ENCODE measurements at regions of chr2 and their contacts with region 1.

Region 1: DNA sequence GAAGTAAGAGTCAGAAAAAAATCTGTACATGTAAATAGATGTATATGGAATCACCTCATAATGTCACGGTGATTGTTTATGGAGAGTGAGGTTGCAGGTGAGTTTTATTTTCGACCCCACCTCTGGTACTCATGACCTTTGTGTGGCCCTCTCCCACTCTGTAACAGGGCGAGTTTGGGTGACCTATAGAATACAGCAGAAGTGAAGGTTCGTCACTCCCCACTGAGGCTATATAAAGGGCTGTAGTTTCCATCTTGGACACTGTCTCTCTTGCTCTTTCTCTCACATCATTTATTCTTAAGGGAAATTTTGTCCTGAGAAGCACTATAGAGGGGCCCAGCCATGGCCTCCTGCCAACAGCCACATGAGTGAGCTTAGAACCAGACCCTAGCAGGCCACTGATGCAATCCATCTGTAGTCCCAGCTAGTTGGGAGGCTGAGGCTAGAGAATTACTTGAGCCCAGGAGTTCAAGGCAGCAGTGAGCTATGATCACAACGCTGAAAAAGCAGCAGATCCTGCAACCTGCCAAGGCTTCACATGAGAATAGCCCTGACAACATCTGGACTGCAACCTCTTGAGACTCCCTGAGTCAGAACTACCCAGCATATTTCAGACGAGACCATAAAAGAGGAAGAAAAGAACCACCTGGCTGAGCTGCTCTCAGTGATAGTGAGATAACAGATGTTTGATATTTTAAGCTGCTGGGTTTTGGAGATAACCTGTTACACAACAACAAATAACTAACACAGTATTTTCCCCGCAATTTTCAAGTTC is 74.3 kb upstream of the SLC1A4 start:
- DNase-seq: no peak
- H3K4me3 ChIP-seq: no peak overlapping the region
- H3K27ac ChIP-seq: no peak overlapping the region
- H3K4me1 ChIP-seq: peaks cover 3% of the 10 kb centered on the region
- H3K27me3 ChIP-seq: no peaks in the 10 kb centered on the region
- CTCF ChIP-seq: no peak

Region 2: DNA sequence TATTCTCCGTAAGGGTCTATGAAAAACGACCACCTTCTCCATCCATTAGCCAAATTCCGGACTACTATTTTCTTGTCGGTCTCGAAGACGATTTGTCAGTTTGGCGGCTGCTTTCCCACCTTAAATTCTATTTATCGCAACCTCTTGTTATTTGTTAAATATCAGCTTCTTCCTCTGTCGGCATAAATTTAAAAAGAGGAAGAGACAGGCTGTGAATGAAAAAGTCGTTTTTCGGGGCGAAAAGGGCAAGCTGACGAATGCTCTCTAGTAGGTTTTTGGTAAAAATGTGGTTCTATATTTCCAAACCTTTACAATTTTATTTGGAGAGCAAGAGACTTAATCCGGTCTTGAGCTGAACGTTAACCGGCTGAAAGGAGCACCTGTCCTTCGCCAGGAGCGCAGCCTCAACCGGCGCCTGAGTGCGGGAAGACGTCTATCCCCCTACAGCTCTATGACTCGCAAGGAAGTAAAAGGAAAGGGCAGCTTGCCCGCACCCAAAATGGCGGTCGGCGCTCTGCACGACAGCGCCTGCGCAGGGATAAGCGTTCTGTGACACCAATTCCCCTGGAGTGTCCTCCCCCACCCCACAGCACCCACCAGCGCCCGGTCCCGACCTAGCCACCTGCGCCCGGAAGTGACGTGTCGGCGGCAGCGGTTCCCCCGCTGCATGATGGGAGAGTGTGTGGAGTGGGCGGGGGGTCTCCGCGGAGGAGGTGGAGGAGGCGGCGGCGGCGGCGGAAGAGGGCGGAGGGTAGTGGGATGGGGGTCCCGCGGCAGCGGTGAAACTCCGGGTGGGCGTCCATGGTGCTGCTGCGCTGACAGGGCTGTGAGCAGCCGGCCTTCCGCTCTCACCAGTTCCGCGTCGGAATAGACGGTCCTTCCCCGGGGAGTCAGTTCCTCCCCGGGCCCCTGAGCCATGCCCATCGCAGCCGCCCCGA is 391.0 kb before region 1 on chr2 and contains the start of gene AFTPH:
- CTCF ChIA-PET with region 1: no interaction called
- dilution Hi-C with region 1: no loop called
- in situ Hi-C with region 1: no loop called
- intact Hi-C with region 1: loop called (anchors 1 kb)
- DNase-seq: peak; percentile 99
- H3K4me3 ChIP-seq: peak within 1 kb of the TSS; percentile 79 to 93 (median 83)
- H3K27ac ChIP-seq: peak within 1 kb of the TSS; percentile 83
- H3K4me1 ChIP-seq: peaks cover 3% of the 10 kb centered on the region
- H3K27me3 ChIP-seq: no peaks in the 10 kb centered on the region
- CTCF ChIP-seq: no peak
- total RNA-seq, gene AFTPH: 20.7 to 34.5 TPM

Region 3: DNA sequence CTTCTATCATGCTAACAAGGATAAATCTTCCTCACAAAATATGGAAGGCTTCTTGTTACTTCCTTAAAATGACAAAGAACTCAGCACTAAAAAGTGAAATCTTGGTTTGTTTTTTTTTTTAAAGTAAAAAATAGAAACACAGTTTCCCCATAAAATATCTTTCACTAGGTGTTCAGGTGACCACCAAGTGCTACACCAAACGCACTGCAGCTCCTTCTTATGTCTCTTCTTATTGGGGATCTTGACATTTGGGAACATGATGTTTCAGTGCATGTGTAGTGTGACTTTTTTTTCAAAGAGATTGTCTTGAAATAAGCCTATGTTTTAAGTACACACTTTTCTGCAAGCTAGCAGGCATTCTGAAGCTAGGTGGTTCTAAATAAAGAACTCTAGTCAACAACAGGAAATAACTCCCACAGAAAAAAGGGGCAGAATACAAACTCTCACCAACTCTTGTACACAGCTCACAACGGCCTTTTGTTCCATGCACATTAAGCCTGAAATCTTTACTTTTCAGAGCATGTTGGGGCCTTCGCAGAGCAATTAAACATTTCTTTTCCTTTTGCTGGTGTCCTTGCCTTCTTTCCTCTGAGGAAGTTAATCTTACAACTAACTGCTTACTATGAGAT is 248.0 kb before region 1 on chr2:
- CTCF ChIA-PET with region 1: no interaction called
- dilution Hi-C with region 1: no loop called
- in situ Hi-C with region 1: no loop called
- intact Hi-C with region 1: no loop called
- DNase-seq: no peak
- H3K4me3 ChIP-seq: no peak overlapping the region
- H3K27ac ChIP-seq: no peak overlapping the region
- H3K4me1 ChIP-seq: peaks cover 3% of the 10 kb centered on the region
- H3K27me3 ChIP-seq: no peaks in the 10 kb centered on the region
- CTCF ChIP-seq: no peak

Region 4: DNA sequence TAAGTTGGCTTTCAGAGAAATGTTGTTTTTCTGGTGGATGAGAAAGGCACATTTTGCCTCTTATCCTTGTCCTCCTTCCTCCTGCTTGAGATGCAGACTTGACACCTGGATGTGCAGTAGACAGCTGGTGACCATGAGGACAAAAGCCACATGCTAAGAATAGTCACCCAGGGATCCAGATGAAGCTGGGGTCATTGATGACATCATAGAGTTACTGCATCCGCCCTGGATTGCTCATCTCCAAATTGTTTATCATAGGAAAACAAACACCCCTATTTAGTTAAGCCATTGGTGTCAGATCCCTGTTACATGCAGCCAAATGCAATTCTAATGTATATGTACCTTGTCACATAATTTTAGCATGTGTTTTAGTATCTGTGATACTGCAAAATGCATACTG is 58.0 kb after region 1 on chr2:
- CTCF ChIA-PET with region 1: no interaction called
- dilution Hi-C with region 1: no loop called
- in situ Hi-C with region 1: no loop called
- intact Hi-C with region 1: no loop called
- DNase-seq: no peak
- H3K4me3 ChIP-seq: no peak overlapping the region
- H3K27ac ChIP-seq: no peak overlapping the region
- H3K4me1 ChIP-seq: peaks cover 15% of the 10 kb centered on the region
- H3K27me3 ChIP-seq: no peaks in the 10 kb centered on the region
- CTCF ChIP-seq: no peak

Region 5: DNA sequence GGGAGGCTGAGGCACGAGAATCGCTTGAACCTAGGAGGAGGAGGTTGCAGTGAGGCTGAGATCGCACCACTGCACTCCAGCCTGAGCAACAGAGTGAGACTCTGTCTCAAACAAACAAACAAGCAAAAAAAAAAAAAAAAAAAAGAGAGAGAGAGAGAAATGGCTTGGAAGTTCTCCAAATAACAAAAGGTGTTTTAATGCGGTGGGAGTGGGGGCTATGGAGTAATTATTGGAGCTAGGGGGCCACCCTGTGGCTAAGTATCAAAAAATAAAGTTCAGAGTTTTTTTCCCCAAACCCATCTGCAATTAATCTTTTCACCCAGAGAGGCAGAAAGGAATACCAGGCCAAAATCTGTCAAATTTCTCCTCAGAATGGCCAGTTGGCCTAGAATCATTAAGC is 118.3 kb after region 1 on chr2:
- CTCF ChIA-PET with region 1: no interaction called
- dilution Hi-C with region 1: loop called (anchors 5 kb)
- in situ Hi-C with region 1: no loop called
- intact Hi-C with region 1: loop called (anchors 1 kb)
- DNase-seq: no peak
- H3K4me3 ChIP-seq: no peak overlapping the region
- H3K27ac ChIP-seq: no peak overlapping the region
- H3K4me1 ChIP-seq: no peaks in the 10 kb centered on the region
- H3K27me3 ChIP-seq: no peaks in the 10 kb centered on the region
- CTCF ChIP-seq: peak; percentile 8 to 12

Region 6: GRCh38 chr2:65045651-65046050 is 130.7 kb after region 1 on chr2:
- CTCF ChIA-PET with region 1: interaction called, 5 read pairs
- dilution Hi-C with region 1: no loop called
- in situ Hi-C with region 1: loop called (anchors 5 kb)
- intact Hi-C with region 1: loop called (anchors 1 kb)
- DNase-seq: no peak
- H3K4me3 ChIP-seq: no peak overlapping the region
- H3K27ac ChIP-seq: no peak overlapping the region
- H3K4me1 ChIP-seq: no peaks in the 10 kb centered on the region
- H3K27me3 ChIP-seq: no peaks in the 10 kb centered on the region
- CTCF ChIP-seq: no peak

Region 7: DNA sequence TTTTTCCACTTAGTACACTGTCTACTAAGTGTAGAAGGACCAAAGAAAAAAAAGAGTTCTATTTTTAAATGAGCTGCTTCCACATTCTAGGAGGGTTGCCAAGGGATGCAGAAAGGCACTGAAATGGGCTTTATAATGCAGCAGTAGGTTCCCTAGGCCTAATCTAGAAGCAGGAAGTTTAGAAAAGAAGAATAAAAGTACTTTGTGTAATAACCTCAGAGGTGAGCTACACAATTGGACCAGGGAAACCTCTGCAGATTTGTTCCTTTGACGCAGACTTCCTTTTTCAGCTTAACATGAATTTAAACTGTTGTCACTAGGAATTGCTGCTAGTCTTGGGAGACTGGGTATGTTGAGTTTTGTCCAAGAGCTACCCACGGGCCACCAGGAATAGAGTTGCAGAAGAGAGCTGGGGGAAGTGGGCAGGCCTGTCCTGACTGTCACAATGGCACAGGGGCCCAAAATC is 249.5 kb after region 1 on chr2:
- CTCF ChIA-PET with region 1: no interaction called
- dilution Hi-C with region 1: no loop called
- in situ Hi-C with region 1: loop called (anchors 10 to 25 kb)
- intact Hi-C with region 1: no loop called
- DNase-seq: no peak
- H3K4me3 ChIP-seq: no peak overlapping the region
- H3K27ac ChIP-seq: no peak overlapping the region
- H3K4me1 ChIP-seq: no peaks in the 10 kb centered on the region
- H3K27me3 ChIP-seq: no peaks in the 10 kb centered on the region
- CTCF ChIP-seq: no peak

Region 8: GRCh38 chr2:65576861-65577601 is 662.1 kb after region 1 on chr2:
- CTCF ChIA-PET with region 1: no interaction called
- dilution Hi-C with region 1: no loop called
- in situ Hi-C with region 1: loop called (anchors 25 kb)
- intact Hi-C with region 1: loop called (anchors 2 kb)
- DNase-seq: peak; percentile 92
- H3K4me3 ChIP-seq: no peak overlapping the region
- H3K27ac ChIP-seq: peak overlapping the region; percentile 89
- H3K4me1 ChIP-seq: peaks cover 16% of the 10 kb centered on the region
- H3K27me3 ChIP-seq: no peaks in the 10 kb centered on the region
- CTCF ChIP-seq: no peak

Region 9: GRCh38 chr2:65604245-65604644 is 689.3 kb after region 1 on chr2:
- CTCF ChIA-PET with region 1: no interaction called
- dilution Hi-C with region 1: no loop called
- in situ Hi-C with region 1: no loop called
- intact Hi-C with region 1: no loop called
- DNase-seq: peak; percentile 28
- H3K4me3 ChIP-seq: no peak overlapping the region
- H3K27ac ChIP-seq: no peak overlapping the region
- H3K4me1 ChIP-seq: peaks cover 8% of the 10 kb centered on the region
- H3K27me3 ChIP-seq: no peaks in the 10 kb centered on the region
- CTCF ChIP-seq: no peak